ENCODE measurements at regions of chr15 and their contacts with region 1.

Region 1: DNA sequence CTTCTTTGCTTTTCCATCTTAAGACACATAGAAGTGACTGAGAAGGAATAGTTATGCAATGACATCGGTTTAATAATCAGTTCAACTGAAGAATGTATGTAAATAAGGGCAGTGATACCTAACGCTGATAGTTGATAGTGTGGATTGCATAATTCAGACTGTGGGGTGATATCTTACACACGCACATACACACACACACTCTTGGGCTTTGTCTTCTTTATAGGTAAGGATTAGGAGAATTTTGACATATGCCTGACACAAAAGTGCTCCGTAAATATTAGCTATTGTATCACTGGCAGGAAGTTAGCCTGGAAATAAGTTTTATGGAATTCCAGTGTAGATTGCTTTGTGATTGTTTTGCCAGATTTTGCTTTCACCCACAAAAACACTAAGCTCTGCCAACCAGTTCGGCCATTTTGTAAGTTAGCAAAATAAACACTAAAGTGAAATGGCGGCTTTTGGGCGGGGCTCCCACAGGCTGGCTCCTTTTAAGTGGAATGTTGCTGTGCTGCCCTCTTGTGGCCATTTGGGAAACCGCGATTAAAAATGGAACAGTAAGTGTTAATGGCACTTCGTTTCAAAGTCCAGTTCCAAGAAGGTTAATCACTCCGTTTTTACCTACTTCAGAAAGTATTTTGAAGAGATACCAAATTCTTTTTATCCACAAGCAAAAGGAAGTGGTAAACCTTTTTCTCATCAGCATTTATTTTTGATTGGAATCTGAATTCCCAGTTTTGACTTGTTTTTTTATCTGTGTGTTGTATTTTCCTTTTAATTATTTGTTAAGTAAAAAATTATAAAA is 17.7 kb downstream of the CHD2 start:
- DNase-seq: peak; percentile 95
- H3K4me3 Mint-ChIP-seq: no peak overlapping the region
- H3K27ac Mint-ChIP-seq: peak overlapping the region; percentile 44
- H3K4me1 Mint-ChIP-seq: peaks cover 88% of the 10 kb centered on the region
- H3K27me3 Mint-ChIP-seq: no peaks in the 10 kb centered on the region

Region 2: DNA sequence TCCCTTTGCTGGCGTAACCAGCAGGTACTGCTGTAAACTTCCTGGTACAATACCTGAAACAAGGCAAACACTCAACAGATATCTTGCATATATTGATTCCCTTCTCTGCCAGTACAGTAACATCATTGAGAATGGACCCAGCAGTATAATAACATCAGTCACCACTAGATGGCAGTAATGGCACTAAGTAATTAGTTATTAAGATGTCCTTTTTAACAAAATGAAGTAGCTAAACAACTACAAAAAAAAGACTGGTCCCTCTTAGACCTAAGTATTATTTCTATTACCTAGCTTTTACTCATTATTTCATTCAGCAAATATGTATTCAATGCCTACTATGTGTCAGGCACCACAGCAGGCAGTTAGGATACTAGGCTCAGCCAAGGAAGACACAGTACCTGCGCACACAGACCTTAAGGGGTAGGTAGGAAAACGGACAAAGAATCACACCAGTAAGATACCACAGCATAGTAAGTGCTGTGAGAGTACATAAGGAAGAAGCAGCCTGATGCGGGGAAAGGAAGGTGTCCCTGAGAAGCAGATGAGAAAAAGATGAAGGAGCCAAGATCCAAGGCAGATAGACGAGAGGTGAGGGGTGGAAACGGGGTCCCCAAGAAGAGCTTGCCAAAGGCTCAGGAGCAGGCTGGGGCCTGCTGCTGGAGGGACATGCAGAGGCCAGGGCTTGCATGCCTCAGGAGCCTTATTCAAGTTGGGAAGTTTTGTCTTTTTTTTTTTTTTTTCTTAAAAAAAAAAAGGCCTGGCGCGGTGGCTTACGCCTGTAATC is 120.4 kb before region 1 on chr15:
- CTCF ChIA-PET with region 1: interaction called, 74 read pairs
- POLR2A ChIA-PET with region 1: interaction called, 326 read pairs
- DNase-seq: no peak
- H3K4me3 Mint-ChIP-seq: no peak overlapping the region
- H3K27ac Mint-ChIP-seq: no peak overlapping the region
- H3K4me1 Mint-ChIP-seq: peaks cover 23% of the 10 kb centered on the region
- H3K27me3 Mint-ChIP-seq: no peaks in the 10 kb centered on the region

Region 3: DNA sequence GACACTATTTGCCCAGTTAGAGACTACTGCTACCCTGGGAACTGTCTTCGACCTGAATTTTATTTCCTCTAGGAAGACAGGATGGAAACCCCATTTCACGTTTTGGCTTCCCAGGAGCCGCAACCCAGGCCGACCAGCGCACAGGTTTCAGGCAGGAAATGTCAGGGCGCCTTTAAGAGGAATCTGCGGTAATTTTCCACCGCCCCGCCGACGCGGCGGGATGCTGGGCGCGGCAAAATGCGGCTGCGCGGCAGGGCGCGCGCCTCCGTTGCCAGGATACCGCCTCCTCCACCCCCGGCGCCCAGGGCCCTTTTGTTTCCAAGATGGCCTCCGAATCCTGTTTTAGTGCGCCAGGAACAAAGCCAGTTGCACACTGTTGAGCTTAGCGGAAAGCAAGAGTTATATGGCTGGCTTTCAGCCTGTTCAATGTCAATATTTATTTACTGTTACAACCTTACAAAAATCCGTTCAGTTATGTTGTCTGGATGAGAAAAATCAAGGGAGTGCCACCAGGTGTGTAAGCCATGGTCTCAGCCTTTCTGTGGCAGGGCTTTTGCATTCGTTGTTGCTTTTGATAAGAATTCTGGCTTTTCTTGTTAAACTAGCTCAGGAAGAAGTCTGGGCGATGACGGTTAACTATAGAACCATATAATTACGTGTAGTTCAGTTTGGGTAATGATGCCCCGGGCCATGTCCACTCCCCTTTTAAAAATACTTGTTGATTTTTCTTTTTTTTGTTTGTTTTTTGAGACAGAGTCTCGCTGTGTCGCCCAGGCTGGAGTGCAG is 97.4 kb before region 1 on chr15:
- CTCF ChIA-PET with region 1: interaction called, 9 read pairs
- POLR2A ChIA-PET with region 1: interaction called, 34 read pairs
- DNase-seq: peak; percentile 88
- H3K4me3 Mint-ChIP-seq: peak overlapping the region; percentile 78
- H3K27ac Mint-ChIP-seq: peak overlapping the region; percentile 93
- H3K4me1 Mint-ChIP-seq: peaks cover 66% of the 10 kb centered on the region
- H3K27me3 Mint-ChIP-seq: no peaks in the 10 kb centered on the region

Region 4: DNA sequence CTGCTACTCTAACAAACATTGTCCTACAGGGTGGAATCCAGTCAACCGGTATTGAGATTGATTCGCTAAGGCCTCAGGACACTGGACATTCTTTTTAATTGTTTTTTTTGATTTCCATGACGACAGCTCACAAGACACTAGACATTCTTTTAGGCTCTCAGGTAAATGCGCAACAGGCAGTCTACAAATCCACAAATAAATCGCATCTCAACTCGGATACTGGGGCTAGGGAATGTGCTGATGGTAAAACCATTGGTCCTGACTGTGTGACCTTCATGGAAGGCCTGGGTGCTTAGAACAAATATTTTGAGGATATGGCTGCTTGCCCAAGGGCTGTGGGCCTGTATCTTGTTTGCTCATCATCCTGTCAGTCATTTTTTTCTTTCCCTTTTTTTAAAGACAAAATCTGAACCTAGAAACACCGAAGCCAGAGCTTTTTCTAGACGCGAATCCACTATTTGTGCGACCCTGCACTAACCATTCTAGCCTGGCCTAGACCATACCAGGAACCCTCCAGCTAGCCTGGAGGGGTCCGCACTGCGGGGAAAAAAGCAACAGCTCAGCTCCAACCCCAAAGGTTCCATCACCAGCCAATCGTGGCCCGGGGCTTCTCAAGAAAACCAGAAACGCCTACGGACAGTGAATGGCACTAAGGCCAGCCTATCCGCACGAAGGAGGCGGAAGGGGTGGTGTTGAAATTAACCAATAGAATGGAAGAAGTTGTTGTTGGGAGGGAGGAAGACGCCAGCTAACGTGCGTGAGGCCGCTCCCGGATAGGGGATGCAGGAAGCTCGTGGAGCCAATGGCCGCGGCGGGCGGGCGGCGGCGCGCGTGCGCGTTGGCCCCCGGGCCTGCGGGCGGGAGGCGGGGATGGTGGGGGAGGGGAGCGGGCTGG is 35.8 kb before region 1 on chr15:
- CTCF ChIA-PET with region 1: interaction called, 12 read pairs
- POLR2A ChIA-PET with region 1: interaction called, 245 read pairs
- DNase-seq: peak; percentile 99
- H3K4me3 Mint-ChIP-seq: peak overlapping the region; percentile 87
- H3K27ac Mint-ChIP-seq: peak overlapping the region; percentile 91
- H3K4me1 Mint-ChIP-seq: peaks cover 38% of the 10 kb centered on the region
- H3K27me3 Mint-ChIP-seq: no peaks in the 10 kb centered on the region

Region 5: GRCh38 chr15:92896561-92896960 is 21.2 kb before region 1 on chr15:
- CTCF ChIA-PET with region 1: interaction called, 62 read pairs
- POLR2A ChIA-PET with region 1: interaction called, 413 read pairs
- DNase-seq: no peak
- H3K4me3 Mint-ChIP-seq: no peak overlapping the region
- H3K27ac Mint-ChIP-seq: no peak overlapping the region
- H3K4me1 Mint-ChIP-seq: peaks cover 69% of the 10 kb centered on the region
- H3K27me3 Mint-ChIP-seq: no peaks in the 10 kb centered on the region

Region 6: DNA sequence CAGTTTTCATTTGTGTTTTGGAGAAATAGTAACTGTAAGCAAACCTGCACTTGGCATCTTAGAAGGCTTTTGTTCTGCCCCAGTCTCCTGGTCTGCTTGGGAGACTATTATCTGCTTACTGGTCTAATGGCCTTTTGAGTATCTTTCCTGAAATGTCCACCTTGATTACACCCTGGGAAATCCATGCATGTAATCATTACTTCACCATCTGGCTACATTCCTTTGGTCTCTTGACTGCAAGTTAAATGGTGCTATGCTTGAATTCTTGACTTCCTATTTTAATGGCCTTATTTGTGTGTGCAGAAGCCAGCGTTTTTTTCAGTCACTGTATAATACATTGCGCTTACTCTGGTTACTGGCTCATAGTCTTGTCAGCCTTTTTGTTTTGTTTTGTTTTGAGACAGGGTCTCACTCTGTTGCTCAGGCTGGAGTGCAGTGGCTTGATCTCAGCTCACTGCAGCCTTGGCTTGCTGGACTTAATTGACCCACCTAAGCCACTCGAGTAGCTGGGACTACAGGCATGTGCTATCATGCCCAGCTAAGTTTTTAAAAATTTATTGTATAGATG is 12.3 kb after region 1 on chr15:
- CTCF ChIA-PET with region 1: interaction called, 12 read pairs
- POLR2A ChIA-PET with region 1: interaction called, 8 read pairs
- DNase-seq: no peak
- H3K4me3 Mint-ChIP-seq: no peak overlapping the region
- H3K27ac Mint-ChIP-seq: no peak overlapping the region
- H3K4me1 Mint-ChIP-seq: peaks cover 42% of the 10 kb centered on the region
- H3K27me3 Mint-ChIP-seq: no peaks in the 10 kb centered on the region

Measured in activated CD4-positive, alpha-beta memory T cell treated with anti-CD3 and anti-CD28 coated beads, Interleukin-2, amount 10 ng/mL, durations not matched to agents 7 days and 5 days (primary cell).